Activated T-helper 1 cell treated with anti-CD3 and anti-CD28 coated beads, Interleukin-12 subunit alpha, Interleukin-12 subunit beta, Interleukin-2, Interleukin-4 antibody, amounts not matched to agents 30 ng/mL and 10 ng/mL and 1 ng/mL, durations not matched to agents 14 hours and 24 hours and 36 hours (primary cell): ENCODE measurements at regions of chr12 and their contacts with region 1.

Region 1: GRCh38 chr12:57632694-57633477 is at the start of gene B4GALNT1:
- DNase-seq: peak; percentile 63
- H3K4me3 Mint-ChIP-seq: peak within 1 kb of the TSS; percentile 79
- H3K27ac Mint-ChIP-seq: no peak within 1 kb of the TSS
- H3K4me1 Mint-ChIP-seq: peaks cover 6% of the 10 kb centered on the region
- H3K27me3 Mint-ChIP-seq: peaks cover 54% of the 10 kb centered on the region
- total RNA-seq, gene B4GALNT1: 4.4 and 4.6 TPM in 2 replicates

Region 2: GRCh38 chr12:57583008-57583831 is 49.7 kb before region 1 on chr12:
- intact Hi-C with region 1: loop called (anchors 1 kb)
- DNase-seq: peak; percentile 61
- H3K4me3 Mint-ChIP-seq: no peak overlapping the region
- H3K27ac Mint-ChIP-seq: no peak overlapping the region
- H3K4me1 Mint-ChIP-seq: peaks cover 7% of the 10 kb centered on the region
- H3K27me3 Mint-ChIP-seq: peaks cover 3% of the 10 kb centered on the region

Region 3: DNA sequence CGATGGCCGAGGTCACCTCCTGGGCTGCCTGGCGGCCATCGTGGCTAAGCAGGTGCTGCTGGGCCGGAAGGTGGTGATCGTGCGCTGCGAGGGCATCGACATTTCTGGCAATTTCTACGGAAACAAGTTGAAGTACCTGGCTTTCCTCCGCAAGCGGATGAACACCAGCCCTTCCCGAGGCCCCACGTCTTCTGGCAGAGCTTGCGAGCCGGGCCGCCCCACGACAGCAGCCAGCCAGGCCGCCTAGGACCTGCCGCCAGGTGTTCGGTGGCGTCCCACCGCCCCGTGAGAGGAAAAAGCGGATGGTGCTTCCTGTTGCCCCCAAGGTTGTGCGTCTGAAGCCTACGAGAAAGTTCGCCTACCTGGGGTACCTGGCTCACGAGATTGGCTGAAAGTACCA is 41.8 kb after region 1 on chr12:
- intact Hi-C with region 1: loop called (anchors 5 kb)
- DNase-seq: no peak
- H3K4me3 Mint-ChIP-seq: no peak overlapping the region
- H3K27ac Mint-ChIP-seq: no peak overlapping the region
- H3K4me1 Mint-ChIP-seq: no peaks in the 10 kb centered on the region
- H3K27me3 Mint-ChIP-seq: peaks cover 11% of the 10 kb centered on the region